Calu3 (cell line): ENCODE measurements at regions of chr6 and their contacts with region 1.

Region 1: GRCh38 chr6:22363714-22364239 is 66.9 kb upstream of the PRL start:
- DNase-seq: no peak
- H3K4me3 Mint-ChIP-seq: no peak overlapping the region
- H3K27ac Mint-ChIP-seq: peak overlapping the region; percentile 83
- H3K4me1 Mint-ChIP-seq: peaks cover 26% of the 10 kb centered on the region
- H3K27me3 Mint-ChIP-seq: no peaks in the 10 kb centered on the region
- CTCF ChIP-seq: no peak

Region 2: GRCh38 chr6:21953831-21954801 is 409.7 kb before region 1 on chr6:
- CTCF ChIA-PET with region 1: no interaction called
- intact Hi-C with region 1: loop called (anchors 10 kb)
- DNase-seq: peak; percentile 34
- H3K4me3 Mint-ChIP-seq: no peak overlapping the region
- H3K27ac Mint-ChIP-seq: peak overlapping the region; percentile 40
- H3K4me1 Mint-ChIP-seq: peaks cover 44% of the 10 kb centered on the region
- H3K27me3 Mint-ChIP-seq: no peaks in the 10 kb centered on the region
- CTCF ChIP-seq: no peak

Region 3: GRCh38 chr6:22320750-22321149 is 43.0 kb before region 1 on chr6:
- CTCF ChIA-PET with region 1: no interaction called
- intact Hi-C with region 1: no loop called
- DNase-seq: peak; percentile 26
- H3K4me3 Mint-ChIP-seq: no peak overlapping the region
- H3K27ac Mint-ChIP-seq: no peak overlapping the region
- H3K4me1 Mint-ChIP-seq: peaks cover 9% of the 10 kb centered on the region
- H3K27me3 Mint-ChIP-seq: no peaks in the 10 kb centered on the region
- CTCF ChIP-seq: no peak